CD8-positive, alpha-beta T cell (primary cell): ENCODE measurements at regions of chr11 and their contacts with region 1.

Region 1: DNA sequence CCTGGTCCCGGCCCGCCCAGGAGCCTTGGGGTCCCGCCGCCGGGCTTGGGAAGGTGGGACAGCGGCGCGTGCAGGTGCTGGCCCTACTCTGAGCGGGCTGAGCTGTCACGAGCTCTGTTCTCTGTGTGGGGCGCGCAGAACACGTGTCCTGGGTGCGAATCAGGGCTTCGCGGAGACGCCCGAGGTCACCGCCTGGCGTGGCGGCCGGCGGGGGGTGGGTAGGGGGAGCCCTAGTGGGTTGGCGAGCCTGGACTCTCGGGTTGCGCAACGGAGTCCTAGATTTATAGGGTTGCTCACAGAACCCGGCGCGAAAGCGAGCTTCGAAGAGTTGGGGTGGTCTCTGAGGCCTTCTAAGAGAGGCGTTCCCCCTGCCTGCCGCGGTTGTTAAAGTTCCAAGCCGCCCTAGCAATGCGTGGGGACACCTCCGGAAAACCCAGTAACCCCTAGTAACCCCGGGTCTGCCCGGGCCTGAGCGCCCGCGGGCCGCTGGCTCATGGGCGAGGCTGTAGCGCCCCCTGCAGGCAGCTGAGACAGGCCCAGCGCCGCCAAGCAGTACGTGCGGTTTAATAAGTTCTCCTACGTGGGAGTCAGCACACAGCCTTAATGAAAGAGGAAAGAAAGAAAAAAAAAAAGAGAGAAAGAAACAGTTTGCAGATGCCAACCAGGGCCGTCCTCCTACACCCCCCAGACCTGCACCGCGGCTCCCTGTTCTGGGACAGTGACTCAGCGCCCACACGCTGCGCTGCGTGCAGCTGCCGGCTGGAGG is 2.8 kb downstream of the ADM start:
- DNase-seq: peak; percentile 67 to 92 (median 81)
- ATAC-seq: peak; percentile 62
- H3K4me3 ChIP-seq: peak overlapping the region; percentile 83 to 91
- H3K4me3 Mint-ChIP-seq: peak overlapping the region; percentile 95
- H3K27ac ChIP-seq: no peak overlapping the region
- H3K27ac Mint-ChIP-seq: no peak overlapping the region
- H3K4me1 ChIP-seq: peaks cover 43% of the 10 kb centered on the region
- H3K4me1 Mint-ChIP-seq: peaks cover 38% of the 10 kb centered on the region
- H3K27me3 ChIP-seq: peaks cover 16 to 30% of the 10 kb centered on the region in 2 experiments
- H3K27me3 Mint-ChIP-seq: peaks cover 40% of the 10 kb centered on the region
- CTCF ChIP-seq: peak; percentile 98

Region 2: DNA sequence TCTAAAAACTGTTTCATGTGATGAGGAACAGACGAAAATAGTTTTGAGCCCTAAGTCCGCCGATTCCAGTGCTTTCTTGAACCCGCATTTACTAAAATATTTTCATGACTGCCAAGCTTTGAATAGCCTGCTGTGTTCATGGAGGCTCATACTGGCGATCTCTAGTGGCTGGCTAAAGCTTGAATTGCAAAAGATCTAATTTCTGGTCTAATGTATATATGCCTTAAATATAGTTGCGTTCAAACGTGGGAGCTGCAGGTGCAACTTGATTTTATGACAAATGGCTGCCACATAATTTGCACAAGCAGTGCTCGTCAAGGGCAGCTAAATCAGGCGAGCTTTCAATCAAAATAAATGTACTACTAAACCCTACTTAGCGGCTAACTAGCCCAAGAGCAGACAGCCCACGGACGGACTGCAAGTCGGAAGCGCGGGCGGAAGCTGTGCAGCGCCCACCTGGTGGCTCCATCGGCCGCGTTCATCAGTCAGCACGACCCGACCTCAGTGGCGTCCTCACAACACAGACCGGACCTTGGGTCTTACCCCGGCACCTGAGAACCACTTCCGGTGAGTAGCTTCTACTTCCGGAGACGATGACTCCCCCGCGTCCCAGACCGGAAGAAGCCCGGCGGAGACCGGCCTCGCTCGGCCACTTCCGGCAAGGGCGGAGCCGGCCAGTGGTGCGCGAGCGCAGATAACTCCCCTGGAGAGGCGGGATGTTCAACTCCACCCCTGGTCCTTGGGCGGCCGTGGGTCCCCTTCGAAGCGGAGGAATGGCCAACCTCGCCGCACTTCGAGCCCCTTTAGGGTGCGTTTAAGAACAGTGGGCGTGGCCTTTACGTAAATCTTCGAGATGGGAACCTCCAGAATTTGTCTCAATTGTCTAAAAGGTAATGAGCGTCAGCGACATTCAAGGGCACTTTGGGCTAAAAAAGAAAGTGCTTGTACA is 1618.9 kb before region 1 on chr11:
- CTCF ChIA-PET with region 1: no interaction called
- POLR2A ChIA-PET with region 1: no interaction called
- intact Hi-C with region 1: loop called (anchors 10 kb)
- DNase-seq: peak; percentile 51 to 90 (median 80)
- ATAC-seq: peak; percentile 78
- H3K4me3 ChIP-seq: peak overlapping the region; percentile 78 to 79
- H3K4me3 Mint-ChIP-seq: peak overlapping the region; percentile 93
- H3K27ac ChIP-seq: peak overlapping the region; percentile 71 to 83
- H3K27ac Mint-ChIP-seq: peak overlapping the region; percentile 93
- H3K4me1 ChIP-seq: peaks cover 29% of the 10 kb centered on the region
- H3K4me1 Mint-ChIP-seq: peaks cover 41% of the 10 kb centered on the region
- H3K27me3 ChIP-seq: no peaks in the 10 kb centered on the region
- H3K27me3 Mint-ChIP-seq: no peaks in the 10 kb centered on the region
- CTCF ChIP-seq: no peak

Region 3: DNA sequence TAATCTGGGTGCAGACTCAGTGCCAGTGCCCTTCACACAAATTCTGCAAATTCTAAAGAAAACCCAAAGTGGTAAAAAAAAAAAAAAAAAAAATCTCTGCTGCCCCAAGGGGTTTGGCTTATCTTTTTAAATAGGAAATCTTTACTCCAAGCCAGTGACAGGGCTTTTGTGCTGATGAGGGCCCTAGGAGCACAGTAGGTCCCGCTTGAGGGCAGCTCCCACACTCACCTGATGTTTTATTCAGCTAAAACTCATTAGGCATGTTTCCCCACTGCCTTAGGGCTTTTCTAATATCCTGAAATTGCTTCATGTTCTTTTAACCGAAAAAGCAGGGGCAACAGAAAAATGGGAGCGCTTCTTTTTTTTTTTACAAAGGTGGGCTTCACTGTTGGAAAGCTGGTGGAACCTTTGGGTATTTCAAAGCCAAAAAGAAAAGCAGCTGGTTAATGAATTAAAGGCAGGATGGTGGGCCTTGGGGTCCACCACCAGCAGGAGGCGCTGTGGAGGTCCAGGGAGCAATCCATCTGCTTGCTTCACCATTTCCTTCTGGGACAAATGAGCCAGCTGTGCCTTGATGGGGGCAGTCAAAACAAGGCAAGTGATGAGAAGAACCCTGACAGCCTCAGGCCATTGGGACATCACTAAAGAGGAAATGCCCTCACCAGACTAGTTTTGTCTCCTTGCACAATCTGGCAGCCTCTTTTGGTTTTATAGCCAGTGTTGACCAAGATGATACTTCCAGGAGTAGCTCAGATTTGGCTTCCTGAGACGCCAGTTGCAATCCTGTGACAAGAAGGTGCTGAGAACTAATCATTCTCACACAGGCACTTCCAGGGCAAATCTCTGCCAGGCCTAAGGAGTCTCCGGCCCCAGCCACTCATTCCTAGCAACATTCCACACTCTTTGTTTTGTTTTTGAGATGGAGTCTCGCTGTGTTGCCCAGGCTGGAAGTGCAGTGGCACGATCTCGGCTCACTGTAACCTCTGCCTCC is 772.5 kb before region 1 on chr11:
- CTCF ChIA-PET with region 1: interaction called, 5 read pairs
- POLR2A ChIA-PET with region 1: no interaction called
- intact Hi-C with region 1: loop called in 1 of 2 experiments (anchors 5 kb)
- DNase-seq: peak; percentile 53 to 87 (median 79)
- ATAC-seq: peak; percentile 61
- H3K4me3 ChIP-seq: no peak overlapping the region
- H3K4me3 Mint-ChIP-seq: no peak overlapping the region
- H3K27ac ChIP-seq: no peak overlapping the region
- H3K27ac Mint-ChIP-seq: no peak overlapping the region
- H3K4me1 ChIP-seq: no peaks in the 10 kb centered on the region
- H3K4me1 Mint-ChIP-seq: no peaks in the 10 kb centered on the region
- H3K27me3 ChIP-seq: no peaks in the 10 kb centered on the region
- H3K27me3 Mint-ChIP-seq: no peaks in the 10 kb centered on the region
- CTCF ChIP-seq: peak; percentile 75

Region 4: DNA sequence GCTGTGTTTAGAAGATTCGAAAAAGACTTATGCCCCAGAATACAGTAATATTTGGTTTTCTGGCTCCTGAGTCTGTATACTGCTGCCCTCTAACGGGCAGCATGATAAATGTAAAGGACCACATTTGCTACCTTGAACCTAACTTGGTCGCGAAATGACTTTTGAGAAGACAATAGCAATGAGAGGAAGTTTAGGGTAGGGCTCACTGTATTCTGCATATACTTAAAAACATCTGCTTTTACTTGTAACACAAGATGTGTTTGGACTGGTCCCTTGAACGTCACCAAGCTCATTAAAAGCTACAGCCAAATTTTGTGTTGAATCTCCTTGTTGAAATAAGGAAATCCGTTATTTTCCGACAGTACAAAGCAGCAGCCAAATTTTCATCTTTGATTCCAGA is 334.6 kb before region 1 on chr11:
- CTCF ChIA-PET with region 1: interaction called, 4 read pairs
- POLR2A ChIA-PET with region 1: no interaction called
- intact Hi-C with region 1: loop called in 1 of 2 experiments (anchors 2 kb)
- DNase-seq: peak in 2 of 9 experiments; percentile 23 to 54
- ATAC-seq: peak; percentile 54
- H3K4me3 ChIP-seq: no peak overlapping the region
- H3K4me3 Mint-ChIP-seq: no peak overlapping the region
- H3K27ac ChIP-seq: no peak overlapping the region
- H3K27ac Mint-ChIP-seq: no peak overlapping the region
- H3K4me1 ChIP-seq: no peaks in the 10 kb centered on the region
- H3K4me1 Mint-ChIP-seq: no peaks in the 10 kb centered on the region
- H3K27me3 ChIP-seq: no peaks in the 10 kb centered on the region
- H3K27me3 Mint-ChIP-seq: no peaks in the 10 kb centered on the region
- CTCF ChIP-seq: peak; percentile 53

Region 5: DNA sequence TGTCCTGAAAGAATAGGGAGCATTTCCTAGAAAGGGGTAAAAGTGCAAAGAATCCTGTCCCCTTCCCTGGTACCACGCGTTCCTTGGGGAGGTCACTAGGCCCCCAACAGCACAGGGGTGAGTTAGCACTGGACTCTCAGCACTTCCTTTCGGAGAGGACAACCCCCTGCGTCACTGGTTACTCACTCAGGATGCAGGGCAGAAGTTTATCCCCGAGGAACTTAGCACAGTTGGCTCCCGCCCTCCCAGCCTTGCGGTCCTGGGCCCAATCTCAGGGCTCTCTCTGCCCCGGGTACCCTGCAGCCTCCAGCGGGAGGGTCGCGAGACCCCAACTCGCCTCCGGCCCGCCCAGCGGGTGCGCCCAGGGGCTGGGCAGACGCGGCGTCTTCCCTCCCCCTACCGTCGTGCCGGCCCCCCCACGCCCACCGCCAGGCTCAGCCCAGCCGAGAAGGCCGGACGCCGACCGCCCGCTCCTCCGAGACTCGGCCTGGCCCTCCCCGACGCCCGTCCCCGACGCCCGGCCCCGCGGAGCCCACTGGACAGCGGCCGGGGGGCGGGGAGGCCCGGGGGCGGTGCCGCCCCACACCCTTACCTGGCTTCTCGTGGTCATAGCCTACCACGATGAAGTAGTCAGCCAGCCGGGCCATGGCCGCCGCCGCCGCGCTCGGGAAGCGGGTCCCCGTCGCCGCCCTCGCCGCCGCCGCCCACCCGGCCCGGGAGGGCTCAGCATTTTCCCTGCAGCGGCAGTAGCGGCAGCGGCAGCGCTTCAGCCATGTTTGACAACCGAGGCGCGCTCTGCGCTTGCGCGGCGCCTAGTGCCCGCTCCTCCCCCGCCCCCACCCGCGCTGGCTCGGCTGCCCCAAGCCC is 14.0 kb before region 1 on chr11 and contains the start of gene SBF2:
- CTCF ChIA-PET with region 1: interaction called, 34 read pairs
- POLR2A ChIA-PET with region 1: interaction called, 5 read pairs
- intact Hi-C with region 1: loop called (anchors 1 kb)
- DNase-seq: peak; percentile 60 to 90 (median 80)
- ATAC-seq: peak; percentile 67
- H3K4me3 ChIP-seq: peak within 1 kb of the TSS; percentile 50 to 67
- H3K4me3 Mint-ChIP-seq: peak within 1 kb of the TSS; percentile 78
- H3K27ac ChIP-seq: no peak within 1 kb of the TSS
- H3K27ac Mint-ChIP-seq: no peak within 1 kb of the TSS
- H3K4me1 ChIP-seq: peaks cover 23% of the 10 kb centered on the region
- H3K4me1 Mint-ChIP-seq: peaks cover 32% of the 10 kb centered on the region
- H3K27me3 ChIP-seq: peaks cover 6 to 12% of the 10 kb centered on the region in 2 experiments
- H3K27me3 Mint-ChIP-seq: peaks cover 17% of the 10 kb centered on the region
- CTCF ChIP-seq: no peak
- total RNA-seq, gene SBF2: 12.6 to 14.3 TPM

Region 6: DNA sequence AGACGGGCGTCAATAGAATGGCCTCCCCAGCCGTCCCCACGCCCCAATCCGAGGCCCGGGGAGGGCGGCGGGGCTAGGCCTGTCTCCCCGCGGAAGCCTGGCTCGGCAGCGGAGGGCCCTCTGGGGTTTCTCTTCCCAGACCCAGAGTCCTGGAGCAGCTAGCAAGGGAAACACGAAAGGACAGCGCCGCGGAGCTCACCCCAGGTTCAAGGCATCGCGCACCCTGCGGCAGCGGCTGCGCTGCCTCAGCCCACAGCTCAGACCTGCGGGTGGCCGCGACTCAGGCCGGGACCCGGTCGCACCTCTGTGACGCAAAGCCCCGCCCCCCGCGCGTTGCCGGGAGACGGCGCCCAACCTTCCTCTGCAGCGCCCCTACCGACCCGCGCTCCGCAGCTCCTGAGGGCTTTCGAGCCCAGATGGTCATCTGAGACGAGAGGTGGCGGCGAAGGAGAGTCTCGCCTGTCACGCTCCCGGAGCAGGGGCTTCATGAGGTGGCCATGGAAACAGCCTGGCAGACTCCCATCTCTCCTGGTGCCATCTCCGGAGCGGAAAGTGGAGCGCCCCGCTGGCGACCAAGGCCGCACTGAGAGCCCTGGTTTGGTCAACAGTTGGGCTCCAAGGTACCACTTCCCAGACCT is 233.4 kb after region 1 on chr11 and contains the start of gene RNF141:
- CTCF ChIA-PET with region 1: no interaction called
- POLR2A ChIA-PET with region 1: interaction called, 3 read pairs
- intact Hi-C with region 1: loop called in 1 of 2 experiments (anchors 10 kb)
- DNase-seq: peak; percentile 89 to 98 (median 95)
- ATAC-seq: peak; percentile 98
- H3K4me3 ChIP-seq: peak within 1 kb of the TSS; percentile 78 to 83
- H3K4me3 Mint-ChIP-seq: peak within 1 kb of the TSS; percentile 91
- H3K27ac ChIP-seq: peak within 1 kb of the TSS; percentile 77 to 85
- H3K27ac Mint-ChIP-seq: peak within 1 kb of the TSS; percentile 89
- H3K4me1 ChIP-seq: peaks cover 13% of the 10 kb centered on the region
- H3K4me1 Mint-ChIP-seq: peaks cover 32% of the 10 kb centered on the region
- H3K27me3 ChIP-seq: no peaks in the 10 kb centered on the region
- H3K27me3 Mint-ChIP-seq: no peaks in the 10 kb centered on the region
- CTCF ChIP-seq: peak; percentile 85
- total RNA-seq, gene RNF141: 17.3 to 19.2 TPM